ENCODE measurements at regions of chr19 and their contacts with region 1.

Region 1: DNA sequence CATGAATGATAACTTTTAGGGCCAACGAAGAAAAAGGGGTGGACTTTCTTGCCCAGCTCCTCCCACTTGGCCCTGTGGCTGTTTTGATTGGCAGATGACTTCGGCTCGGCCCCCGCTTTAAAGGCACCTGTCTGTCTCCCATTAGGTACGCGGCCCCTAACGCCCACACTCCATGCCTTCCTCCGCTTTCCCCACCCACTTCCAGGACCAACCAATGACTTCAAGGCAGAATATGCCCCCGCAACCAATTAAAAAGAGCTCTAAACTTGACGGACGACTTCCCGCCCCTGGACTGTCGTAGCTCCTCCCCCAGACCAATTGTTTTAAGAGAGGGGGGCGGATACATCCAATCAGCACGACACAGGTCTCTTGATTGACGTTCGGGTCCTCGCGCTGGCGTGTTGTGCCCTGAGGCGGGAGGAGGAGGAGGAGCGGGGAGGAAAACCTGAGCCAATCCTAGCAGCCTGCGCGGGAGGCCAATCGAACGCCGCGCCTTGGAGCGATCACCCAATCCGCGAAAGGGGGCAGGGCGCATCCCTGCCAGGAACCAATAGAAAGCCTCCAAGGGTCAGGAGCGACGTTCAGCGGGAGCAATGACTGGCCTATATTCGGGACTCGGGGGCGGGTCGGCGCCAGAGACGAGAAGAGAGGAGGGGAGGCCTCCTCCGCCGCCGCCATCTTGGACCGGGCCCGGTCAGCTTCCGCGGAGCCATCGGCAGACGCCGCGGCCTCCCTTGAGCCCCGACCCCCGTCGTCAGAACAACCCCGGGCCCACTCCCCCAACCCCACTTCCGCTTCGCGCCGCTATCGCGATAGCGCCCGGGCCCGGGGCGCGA is at the start of gene CNOT3:
- DNase-seq: peak; percentile 100
- H3K4me3 Mint-ChIP-seq: peak within 1 kb of the TSS; percentile 84
- H3K27ac Mint-ChIP-seq: peak within 1 kb of the TSS; percentile 97
- H3K4me1 Mint-ChIP-seq: peaks cover 34% of the 10 kb centered on the region
- H3K27me3 Mint-ChIP-seq: peaks cover 13% of the 10 kb centered on the region
- CTCF ChIP-seq: no peak
- total RNA-seq, gene CNOT3: 79.4 and 87.4 TPM in 2 replicates

Region 2: GRCh38 chr19:53792721-53793433 is 344.4 kb before region 1 on chr19:
- CTCF ChIA-PET with region 1: interaction called, 10 read pairs
- intact Hi-C with region 1: no loop called
- DNase-seq: peak; percentile 94
- H3K4me3 Mint-ChIP-seq: no peak overlapping the region
- H3K27ac Mint-ChIP-seq: no peak overlapping the region
- H3K4me1 Mint-ChIP-seq: no peaks in the 10 kb centered on the region
- H3K27me3 Mint-ChIP-seq: no peaks in the 10 kb centered on the region
- CTCF ChIP-seq: peak; percentile 98

Region 3: DNA sequence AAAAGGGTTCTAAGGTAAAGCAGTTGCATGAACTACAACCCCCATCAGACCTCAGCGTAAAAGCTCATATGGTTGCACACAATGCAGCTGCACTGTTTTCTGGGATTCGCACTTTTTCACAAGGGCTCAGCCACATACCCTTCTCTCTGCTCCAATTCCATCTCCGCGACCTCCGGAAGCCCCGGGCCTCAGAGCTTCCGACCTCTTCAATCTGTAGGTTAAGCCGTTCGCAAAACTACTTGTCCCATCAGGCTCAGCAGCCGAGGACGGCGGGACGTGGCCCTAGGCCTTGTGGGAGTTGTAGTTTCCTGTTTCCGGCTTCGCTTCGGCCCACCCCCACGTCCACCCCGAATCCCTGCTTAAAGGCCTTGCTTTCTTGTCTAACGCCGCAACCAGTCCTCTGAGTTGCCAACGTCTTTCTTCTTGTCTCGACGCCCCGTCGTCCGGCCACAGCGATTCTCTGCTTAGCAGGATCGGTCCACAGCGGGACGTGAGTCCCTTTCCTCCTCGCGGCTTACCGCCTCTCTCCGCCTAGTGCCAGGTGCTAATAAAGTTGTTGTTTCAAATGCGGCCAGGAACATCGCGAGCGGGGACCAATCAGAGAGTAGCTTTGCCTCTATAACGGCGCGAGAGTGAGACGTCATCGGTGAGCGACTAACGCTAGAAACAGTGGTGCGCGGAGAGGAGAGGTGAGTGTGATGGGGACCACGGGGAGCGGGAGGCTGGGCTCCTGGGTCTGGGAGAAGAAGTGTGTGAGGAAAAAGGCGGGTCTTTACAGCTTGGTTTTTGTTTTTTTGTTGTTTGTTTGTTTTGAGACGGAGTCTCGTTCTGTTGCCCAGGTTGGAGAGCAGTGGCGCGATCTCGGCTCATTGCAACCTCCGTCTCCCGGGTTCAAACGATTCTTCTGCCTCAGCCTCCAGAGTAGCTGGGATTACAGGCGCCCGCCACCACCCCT is 21.9 kb before region 1 on chr19 and contains the starts of genes PRPF31 and TFPT:
- CTCF ChIA-PET with region 1: interaction called, 10 read pairs
- intact Hi-C with region 1: no loop called
- DNase-seq: peak; percentile 96
- H3K4me3 Mint-ChIP-seq: peak within 1 kb of the TSS; percentile 82
- H3K27ac Mint-ChIP-seq: peak within 1 kb of the TSS; percentile 93
- H3K4me1 Mint-ChIP-seq: peaks cover 27% of the 10 kb centered on the region
- H3K27me3 Mint-ChIP-seq: no peaks in the 10 kb centered on the region
- CTCF ChIP-seq: no peak
- total RNA-seq, gene PRPF31: 106 TPM in 2 replicates
- total RNA-seq, gene TFPT: 30.8 and 34.2 TPM in 2 replicates

Region 4: GRCh38 chr19:54159352-54160181 is 22.3 kb after region 1 on chr19 and contains the start of gene LENG1:
- CTCF ChIA-PET with region 1: interaction called, 6 read pairs
- intact Hi-C with region 1: loop called (anchors 1 kb)
- DNase-seq: peak; percentile 99
- H3K4me3 Mint-ChIP-seq: peak within 1 kb of the TSS; percentile 87
- H3K27ac Mint-ChIP-seq: peak within 1 kb of the TSS; percentile 89
- H3K4me1 Mint-ChIP-seq: peaks cover 30% of the 10 kb centered on the region
- H3K27me3 Mint-ChIP-seq: no peaks in the 10 kb centered on the region
- CTCF ChIP-seq: peak; percentile 34
- total RNA-seq, gene LENG1: 9.9 and 10.7 TPM in 2 replicates

Measured in Calu3 (cell line).